MCF 10A (cell line): ENCODE measurements at regions of chr2 and their contacts with region 1.

Region 1: GRCh38 chr2:23351388-23352141 is 33.4 kb upstream of the KLHL29 start:
- DNase-seq: peak; percentile 81
- H3K4me3 Mint-ChIP-seq: no peak overlapping the region
- H3K27ac Mint-ChIP-seq: no peak overlapping the region
- H3K4me1 Mint-ChIP-seq: peaks cover 5% of the 10 kb centered on the region
- H3K27me3 Mint-ChIP-seq: peaks cover 20% of the 10 kb centered on the region
- CTCF ChIP-seq: peak; percentile 59

Region 2: GRCh38 chr2:23199115-23199918 is 152.2 kb before region 1 on chr2:
- CTCF ChIA-PET with region 1: interaction called, 6 read pairs
- POLR2A ChIA-PET with region 1: no interaction called
- intact Hi-C with region 1: loop called (anchors 2 kb)
- DNase-seq: peak; percentile 62
- H3K4me3 Mint-ChIP-seq: no peak overlapping the region
- H3K27ac Mint-ChIP-seq: no peak overlapping the region
- H3K4me1 Mint-ChIP-seq: no peaks in the 10 kb centered on the region
- H3K27me3 Mint-ChIP-seq: peaks cover 80% of the 10 kb centered on the region
- CTCF ChIP-seq: peak; percentile 63

Region 3: DNA sequence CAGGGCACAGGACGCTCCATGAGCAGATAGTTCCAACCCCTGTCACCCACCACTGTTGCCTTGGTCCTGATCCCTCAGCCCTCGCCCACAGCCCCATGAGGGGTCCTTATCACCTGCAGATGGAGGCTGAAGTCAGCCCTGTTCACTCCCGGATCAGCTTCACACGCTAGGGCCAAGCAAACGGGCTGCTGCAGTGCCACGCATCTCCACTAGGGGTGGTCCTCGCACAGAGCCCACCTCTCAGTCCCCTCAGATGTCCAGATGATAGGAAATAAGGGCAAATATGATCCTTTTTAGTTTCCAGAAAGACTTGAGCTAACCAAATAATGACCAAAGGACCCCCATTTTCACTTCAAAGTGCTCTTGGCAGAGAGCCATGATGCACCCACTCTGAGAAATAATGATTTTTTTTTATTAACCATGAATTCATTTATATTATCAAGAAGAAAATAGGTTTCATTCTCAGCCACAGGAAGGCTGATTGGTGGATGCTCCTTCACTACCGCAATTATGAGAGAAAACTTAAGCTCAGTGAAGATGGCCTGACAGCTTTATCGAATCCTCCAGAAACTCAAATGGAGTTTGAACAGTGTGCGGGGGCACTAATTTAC is 38.5 kb before region 1 on chr2:
- CTCF ChIA-PET with region 1: no interaction called
- POLR2A ChIA-PET with region 1: no interaction called
- intact Hi-C with region 1: no loop called
- DNase-seq: peak; percentile 4
- H3K4me3 Mint-ChIP-seq: no peak overlapping the region
- H3K27ac Mint-ChIP-seq: no peak overlapping the region
- H3K4me1 Mint-ChIP-seq: no peaks in the 10 kb centered on the region
- H3K27me3 Mint-ChIP-seq: peaks cover 68% of the 10 kb centered on the region
- CTCF ChIP-seq: peak; percentile 46

Region 4: DNA sequence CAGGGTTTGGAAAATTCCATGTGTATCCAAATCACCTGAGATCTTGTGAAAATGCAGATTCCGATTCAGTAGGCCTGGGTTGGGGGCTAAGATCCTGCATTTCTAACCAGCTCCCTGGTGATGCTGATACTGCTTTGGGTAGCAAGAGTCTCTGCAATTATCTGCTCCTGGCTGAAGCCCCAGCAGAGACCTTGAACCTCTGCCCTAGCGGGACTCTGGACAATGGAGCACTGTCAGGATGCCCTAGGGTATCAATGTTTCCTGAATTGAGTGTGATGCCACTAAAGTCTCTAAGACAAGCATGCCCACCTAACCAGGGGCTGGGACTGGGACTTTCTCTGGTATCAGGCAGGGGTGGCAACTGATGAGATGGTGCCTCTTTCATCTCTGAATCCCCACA is 16.0 kb before region 1 on chr2:
- CTCF ChIA-PET with region 1: interaction called, 14 read pairs
- POLR2A ChIA-PET with region 1: no interaction called
- intact Hi-C with region 1: no loop called
- DNase-seq: no peak
- H3K4me3 Mint-ChIP-seq: no peak overlapping the region
- H3K27ac Mint-ChIP-seq: no peak overlapping the region
- H3K4me1 Mint-ChIP-seq: no peaks in the 10 kb centered on the region
- H3K27me3 Mint-ChIP-seq: peaks cover 52% of the 10 kb centered on the region
- CTCF ChIP-seq: no peak

Region 5: DNA sequence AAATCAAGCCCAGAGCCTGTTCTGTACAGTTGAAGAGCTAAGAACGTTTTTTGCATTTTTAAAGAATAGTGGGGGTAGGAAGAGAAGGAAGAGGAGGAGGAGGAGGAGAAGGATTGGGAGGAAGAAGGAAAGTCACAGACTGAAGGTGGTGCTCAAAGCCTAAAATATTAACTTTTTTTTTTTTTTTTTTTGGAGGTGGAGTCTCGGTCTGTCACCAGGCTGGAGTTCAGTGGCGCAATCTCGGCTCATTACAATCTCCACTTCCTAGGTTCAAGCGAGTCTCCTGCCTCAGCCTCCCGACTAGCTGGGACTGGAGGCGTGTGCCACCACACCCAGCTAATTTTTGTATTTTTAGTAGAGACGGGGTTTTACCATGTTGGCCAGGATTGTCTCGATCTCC is 15.2 kb after region 1 on chr2:
- CTCF ChIA-PET with region 1: interaction called, 17 read pairs
- POLR2A ChIA-PET with region 1: interaction called, 3 read pairs
- intact Hi-C with region 1: no loop called
- DNase-seq: peak; percentile 74
- H3K4me3 Mint-ChIP-seq: no peak overlapping the region
- H3K27ac Mint-ChIP-seq: peak overlapping the region; percentile 1
- H3K4me1 Mint-ChIP-seq: peaks cover 19% of the 10 kb centered on the region
- H3K27me3 Mint-ChIP-seq: no peaks in the 10 kb centered on the region
- CTCF ChIP-seq: peak; percentile 28

Region 6: DNA sequence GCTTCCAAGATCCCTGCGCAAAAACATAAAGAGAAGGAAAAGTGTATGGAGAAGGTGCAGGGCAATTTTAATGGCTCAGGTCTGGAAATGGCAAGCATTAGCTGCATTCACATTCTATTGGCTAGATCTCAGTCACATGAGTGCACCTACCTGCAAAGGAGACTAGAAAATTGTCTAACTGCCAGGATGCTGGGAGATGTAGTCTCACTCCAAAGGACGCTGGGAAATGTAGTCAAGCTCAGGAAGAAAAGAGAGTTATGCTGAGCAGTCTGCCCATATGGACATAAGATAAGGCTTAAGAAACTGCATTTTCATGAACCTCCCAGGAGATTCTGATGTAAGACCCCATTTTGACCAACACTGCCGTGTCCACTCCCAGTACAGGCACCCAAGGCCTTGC is 23.9 kb after region 1 on chr2:
- CTCF ChIA-PET with region 1: interaction called, 17 read pairs
- POLR2A ChIA-PET with region 1: interaction called, 4 read pairs
- intact Hi-C with region 1: no loop called
- DNase-seq: peak; percentile 63
- H3K4me3 Mint-ChIP-seq: no peak overlapping the region
- H3K27ac Mint-ChIP-seq: no peak overlapping the region
- H3K4me1 Mint-ChIP-seq: peaks cover 29% of the 10 kb centered on the region
- H3K27me3 Mint-ChIP-seq: no peaks in the 10 kb centered on the region
- CTCF ChIP-seq: no peak

Region 7: GRCh38 chr2:23584054-23584745 is 232.6 kb after region 1 on chr2:
- CTCF ChIA-PET with region 1: no interaction called
- POLR2A ChIA-PET with region 1: no interaction called
- intact Hi-C with region 1: no loop called
- DNase-seq: no peak
- H3K4me3 Mint-ChIP-seq: no peak overlapping the region
- H3K27ac Mint-ChIP-seq: no peak overlapping the region
- H3K4me1 Mint-ChIP-seq: no peaks in the 10 kb centered on the region
- H3K27me3 Mint-ChIP-seq: no peaks in the 10 kb centered on the region
- CTCF ChIP-seq: no peak